ENCODE measurements at regions of chr1 and their contacts with region 1.

Region 1: GRCh38 chr1:18926315-18927081 is 24.1 kb upstream of the ALDH4A1 start:
- DNase-seq: peak; percentile 91
- H3K4me3 Mint-ChIP-seq: peak overlapping the region; percentile 85
- H3K27ac Mint-ChIP-seq: peak overlapping the region; percentile 100
- H3K4me1 Mint-ChIP-seq: peaks cover 73% of the 10 kb centered on the region
- H3K27me3 Mint-ChIP-seq: no peaks in the 10 kb centered on the region

Region 2: DNA sequence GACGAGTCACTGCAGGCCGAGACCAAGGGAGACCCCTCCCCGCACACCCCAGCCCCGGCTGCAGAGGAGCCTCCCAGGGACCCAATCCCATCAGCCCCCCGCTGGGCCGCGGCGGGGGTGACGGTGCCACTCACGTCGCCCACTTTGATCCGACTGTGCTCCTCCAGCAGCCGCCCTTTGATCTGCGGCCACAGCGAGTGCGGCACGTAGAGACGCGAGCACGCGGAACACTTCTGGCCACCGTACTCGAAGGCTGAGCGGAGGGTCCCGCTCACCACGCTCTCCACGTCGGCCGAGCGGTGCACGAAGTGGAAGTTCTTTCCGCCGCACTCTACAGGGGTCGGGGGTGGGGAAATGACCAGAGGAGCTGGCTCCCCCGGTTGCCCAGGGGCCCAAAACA is 49.2 kb before region 1 on chr1:
- CTCF ChIA-PET with region 1: no interaction called
- DNase-seq: no peak
- H3K4me3 Mint-ChIP-seq: no peak overlapping the region
- H3K27ac Mint-ChIP-seq: no peak overlapping the region
- H3K4me1 Mint-ChIP-seq: no peaks in the 10 kb centered on the region
- H3K27me3 Mint-ChIP-seq: no peaks in the 10 kb centered on the region

Region 3: GRCh38 chr1:18949686-18950400 is 23.3 kb after region 1 on chr1:
- CTCF ChIA-PET with region 1: interaction called, 30 read pairs
- DNase-seq: peak; percentile 41
- H3K4me3 Mint-ChIP-seq: peak overlapping the region; percentile 77
- H3K27ac Mint-ChIP-seq: peak overlapping the region; percentile 93
- H3K4me1 Mint-ChIP-seq: peaks cover 96% of the 10 kb centered on the region
- H3K27me3 Mint-ChIP-seq: peaks cover 19% of the 10 kb centered on the region